PC-3 (cell line): ENCODE measurements at regions of chr1 and their contacts with region 1.

Region 1: DNA sequence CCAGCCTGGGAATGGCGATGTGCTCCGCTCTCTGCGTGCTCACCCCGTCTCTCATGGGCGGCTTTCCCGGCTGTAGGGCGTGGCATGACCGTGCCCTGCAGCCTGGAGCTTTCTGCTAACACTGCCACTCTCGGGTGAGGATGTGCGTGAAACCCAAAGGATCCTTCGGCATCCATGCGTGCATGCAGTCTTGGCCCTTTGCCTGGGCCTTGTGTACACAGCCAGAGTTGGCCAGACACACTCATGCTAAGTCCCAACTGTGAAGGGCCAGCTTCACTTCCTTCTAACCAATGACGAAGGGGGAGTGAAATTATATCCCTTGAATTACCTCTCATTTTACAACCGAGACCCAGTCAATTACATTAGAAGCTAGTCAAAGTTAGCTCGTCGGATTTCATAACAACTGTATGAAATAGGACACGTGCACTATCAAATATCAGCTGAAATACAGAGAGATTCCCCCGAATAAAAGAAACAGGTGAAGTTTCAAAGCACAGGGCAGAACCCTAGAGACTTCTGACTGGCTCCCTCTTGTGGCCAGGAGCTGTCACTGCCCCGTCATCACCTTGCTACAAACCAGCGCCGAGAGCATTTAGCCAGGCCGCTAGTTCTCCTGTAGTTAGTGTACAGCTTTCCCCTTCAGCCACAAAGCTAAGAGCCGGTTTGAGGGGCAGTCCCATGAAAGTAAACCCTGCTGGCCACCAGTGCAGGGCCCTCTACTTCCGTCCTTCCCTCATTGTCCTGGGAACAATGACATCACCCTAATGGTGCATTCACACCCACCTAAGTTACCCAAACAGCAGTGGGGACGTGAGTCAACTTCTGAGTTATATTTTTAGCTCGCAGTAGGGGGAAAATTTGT is 63.4 kb upstream of the COA6 start:
- DNase-seq: peak; percentile 95
- ATAC-seq: peak; percentile 83
- H3K4me3 ChIP-seq: peak overlapping the region; percentile 58
- H3K27ac ChIP-seq: peak overlapping the region; percentile 92
- H3K4me1 ChIP-seq: peaks cover 24% of the 10 kb centered on the region
- H3K27me3 ChIP-seq: no peaks in the 10 kb centered on the region
- CTCF ChIP-seq: peak; percentile 98

Region 2: DNA sequence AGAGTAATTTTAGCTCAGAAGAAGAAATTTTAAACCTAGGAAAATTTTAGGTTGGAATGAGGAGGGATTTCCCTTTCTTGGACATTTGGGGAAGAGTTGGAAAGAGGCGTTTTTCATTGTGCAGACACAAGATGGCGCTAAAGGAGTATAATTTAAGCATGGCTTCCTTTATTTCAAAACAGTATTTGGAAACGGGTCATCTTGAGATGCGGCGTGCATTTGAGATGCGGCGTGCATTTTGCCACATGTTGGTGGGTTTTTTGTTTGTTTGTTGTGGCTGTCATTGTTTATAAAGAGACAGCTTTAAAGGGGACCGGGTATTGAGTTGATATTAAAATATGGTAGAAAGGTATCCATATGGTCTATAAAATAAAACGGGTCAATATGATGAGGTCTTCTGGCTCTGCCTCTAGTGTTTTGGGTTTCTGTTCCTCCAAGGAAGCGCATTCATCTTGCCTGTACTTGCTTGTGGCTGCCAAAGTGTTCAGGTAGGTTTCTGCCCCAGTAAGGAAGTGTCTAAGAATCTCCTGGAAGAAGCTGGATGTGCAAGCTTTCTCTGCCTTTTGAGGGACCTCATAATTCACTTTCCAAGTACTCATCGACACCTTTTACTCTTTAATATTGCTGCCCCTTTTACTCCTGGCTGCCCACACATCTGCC is 195.1 kb before region 1 on chr1:
- CTCF ChIA-PET with region 1: interaction called, 3 read pairs
- POLR2A ChIA-PET with region 1: interaction called, 3 read pairs
- intact Hi-C with region 1: loop called (anchors 1 kb)
- DNase-seq: peak; percentile 85
- ATAC-seq: peak; percentile 65
- H3K4me3 ChIP-seq: peak overlapping the region; percentile 60
- H3K27ac ChIP-seq: no peak overlapping the region
- H3K4me1 ChIP-seq: peaks cover 2% of the 10 kb centered on the region
- H3K27me3 ChIP-seq: no peaks in the 10 kb centered on the region
- CTCF ChIP-seq: peak; percentile 92

Region 3: DNA sequence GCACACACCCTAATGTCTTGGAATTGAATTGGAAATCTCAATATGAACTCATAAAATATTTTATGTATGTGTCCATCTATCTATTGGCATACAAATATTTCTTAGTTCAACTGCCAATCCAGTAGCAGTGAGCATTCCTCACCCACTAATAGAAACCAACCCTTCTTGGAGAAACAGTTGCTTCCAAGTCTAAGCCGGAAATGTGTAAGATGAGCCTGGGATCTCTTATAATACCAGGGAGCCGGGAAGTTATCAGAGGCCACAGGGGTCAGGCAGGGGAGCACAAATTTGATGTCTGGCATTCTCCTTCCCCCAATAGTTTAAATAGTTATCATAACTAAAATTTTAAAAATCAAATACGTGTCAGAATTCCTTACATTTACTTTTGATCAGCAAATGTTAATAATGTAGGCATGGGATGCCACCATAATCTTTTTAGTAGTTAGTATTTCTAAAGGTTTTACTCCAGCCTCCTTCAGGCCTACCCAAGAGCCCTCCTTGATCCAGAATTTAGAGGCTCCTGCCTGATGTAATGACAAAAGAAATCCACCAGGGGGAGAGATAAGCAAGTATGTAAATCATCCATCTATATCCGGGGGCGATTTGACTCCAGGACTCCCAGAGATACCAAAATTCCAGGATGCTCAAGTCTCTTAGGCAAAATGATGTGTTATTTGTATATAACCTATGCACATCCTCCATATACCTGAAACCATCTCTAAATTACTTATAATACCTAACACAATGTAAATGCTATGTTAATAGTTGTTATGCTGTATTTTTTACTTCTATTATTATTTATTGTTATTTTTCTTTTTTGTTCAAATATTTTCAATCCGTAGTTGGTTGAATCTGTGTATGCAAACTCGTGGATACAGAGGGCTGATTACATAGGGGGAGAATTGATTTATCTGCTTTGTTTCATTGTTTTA is 155.2 kb before region 1 on chr1:
- CTCF ChIA-PET with region 1: no interaction called
- POLR2A ChIA-PET with region 1: no interaction called
- intact Hi-C with region 1: loop called (anchors 1 kb)
- DNase-seq: peak; percentile 92
- ATAC-seq: peak; percentile 88
- H3K4me3 ChIP-seq: no peak overlapping the region
- H3K27ac ChIP-seq: no peak overlapping the region
- H3K4me1 ChIP-seq: no peaks in the 10 kb centered on the region
- H3K27me3 ChIP-seq: no peaks in the 10 kb centered on the region
- CTCF ChIP-seq: peak; percentile 92

Region 4: GRCh38 chr1:234206651-234207284 is 103.1 kb before region 1 on chr1:
- CTCF ChIA-PET with region 1: interaction called, 3 read pairs
- POLR2A ChIA-PET with region 1: no interaction called
- intact Hi-C with region 1: loop called (anchors 5 kb)
- DNase-seq: peak; percentile 99
- ATAC-seq: peak; percentile 98
- H3K4me3 ChIP-seq: no peak overlapping the region
- H3K27ac ChIP-seq: peak overlapping the region; percentile 35
- H3K4me1 ChIP-seq: peaks cover 22% of the 10 kb centered on the region
- H3K27me3 ChIP-seq: no peaks in the 10 kb centered on the region
- CTCF ChIP-seq: no peak

Region 5: GRCh38 chr1:234212764-234213657 is 96.8 kb before region 1 on chr1:
- CTCF ChIA-PET with region 1: interaction called, 12 read pairs
- POLR2A ChIA-PET with region 1: interaction called, 5 read pairs
- intact Hi-C with region 1: loop called (anchors 5 kb)
- DNase-seq: peak; percentile 73
- ATAC-seq: peak; percentile 23
- H3K4me3 ChIP-seq: no peak overlapping the region; the same call in 1 of the 2 replicates
- H3K27ac ChIP-seq: no peak overlapping the region
- H3K4me1 ChIP-seq: peaks cover 23% of the 10 kb centered on the region
- H3K27me3 ChIP-seq: no peaks in the 10 kb centered on the region
- CTCF ChIP-seq: peak; percentile 76

Region 6: GRCh38 chr1:234246638-234247116 is 63.2 kb before region 1 on chr1:
- CTCF ChIA-PET with region 1: no interaction called
- POLR2A ChIA-PET with region 1: no interaction called
- intact Hi-C with region 1: no loop called
- DNase-seq: no peak
- ATAC-seq: no peak
- H3K4me3 ChIP-seq: no peak overlapping the region
- H3K27ac ChIP-seq: no peak overlapping the region
- H3K4me1 ChIP-seq: no peaks in the 10 kb centered on the region
- H3K27me3 ChIP-seq: no peaks in the 10 kb centered on the region
- CTCF ChIP-seq: no peak

Region 7: DNA sequence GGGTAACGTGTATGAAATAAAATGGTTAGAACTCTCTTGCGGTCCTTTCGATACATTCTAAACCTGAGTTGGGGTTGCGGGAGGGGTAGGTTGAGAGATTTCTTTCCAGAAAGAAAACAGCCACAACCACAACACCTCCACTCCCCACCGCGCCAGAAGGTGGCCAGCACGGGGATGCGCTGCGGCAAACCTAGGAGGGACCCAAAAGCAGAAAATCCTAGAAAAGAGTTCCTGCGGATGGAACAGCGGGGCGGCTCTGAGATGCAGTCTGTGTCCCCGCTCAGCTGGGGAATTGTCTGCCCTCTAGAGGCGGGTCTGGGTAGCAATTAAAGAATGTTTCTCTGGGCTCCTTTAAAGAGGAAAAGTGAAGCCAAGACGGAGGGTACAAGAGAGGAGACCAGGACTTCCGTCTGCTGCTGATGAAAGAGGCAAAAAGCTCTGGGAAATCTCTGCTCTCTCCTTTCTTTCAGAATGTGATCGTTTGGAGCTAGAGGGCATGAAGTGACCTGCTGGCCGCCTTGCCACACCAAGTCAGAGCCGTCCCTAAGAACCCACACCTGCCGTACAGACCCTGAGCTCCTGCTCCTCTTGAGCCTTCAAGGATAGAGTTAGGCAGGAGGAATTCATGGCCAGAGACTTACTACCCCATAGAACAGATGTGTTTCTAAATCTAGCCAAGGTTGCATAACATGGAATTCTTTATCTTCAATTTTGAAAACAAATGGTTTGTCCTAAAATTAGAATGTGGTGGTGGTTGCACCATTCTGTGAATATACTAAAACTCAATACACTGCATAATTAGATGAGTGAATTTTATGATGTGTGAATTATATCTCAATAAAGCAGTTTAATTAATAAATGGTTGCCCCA is 16.9 kb after region 1 on chr1:
- CTCF ChIA-PET with region 1: interaction called, 6 read pairs
- POLR2A ChIA-PET with region 1: no interaction called
- intact Hi-C with region 1: loop called (anchors 2 kb)
- DNase-seq: peak; percentile 81
- ATAC-seq: peak; percentile 94
- H3K4me3 ChIP-seq: peak overlapping the region; percentile 66
- H3K27ac ChIP-seq: no peak overlapping the region
- H3K4me1 ChIP-seq: no peaks in the 10 kb centered on the region
- H3K27me3 ChIP-seq: no peaks in the 10 kb centered on the region
- CTCF ChIP-seq: peak; percentile 96

Region 8: DNA sequence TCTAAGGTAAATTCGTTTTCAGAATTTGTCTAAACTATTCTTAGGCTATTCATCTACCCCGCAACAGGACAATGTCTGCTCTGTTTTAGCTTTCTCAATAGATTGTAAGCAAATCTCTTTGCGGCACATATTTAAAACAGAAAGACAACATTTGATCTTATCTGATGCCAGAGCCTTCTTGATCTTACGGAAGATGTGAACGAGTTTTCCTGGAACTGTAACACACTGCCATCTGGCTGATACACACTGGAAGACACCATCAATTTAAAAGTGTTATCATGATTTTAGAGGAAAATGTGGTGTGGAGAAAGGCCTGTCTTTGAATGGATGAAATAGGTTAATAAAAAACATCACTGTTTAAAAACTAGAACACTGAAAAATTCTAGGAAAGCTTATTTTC is 99.5 kb after region 1 on chr1:
- CTCF ChIA-PET with region 1: no interaction called
- POLR2A ChIA-PET with region 1: no interaction called
- intact Hi-C with region 1: no loop called
- DNase-seq: no peak
- ATAC-seq: no peak
- H3K4me3 ChIP-seq: no peak overlapping the region
- H3K27ac ChIP-seq: no peak overlapping the region
- H3K4me1 ChIP-seq: no peaks in the 10 kb centered on the region
- H3K27me3 ChIP-seq: no peaks in the 10 kb centered on the region
- CTCF ChIP-seq: peak; percentile 23; the same call in 1 of the 2 replicates